HCT116 (cell line): ENCODE measurements at regions of chr2 and their contacts with region 1.

Region 1: GRCh38 chr2:120680136-120680761 is 55.4 kb upstream of the GLI2 start:
- DNase-seq: peak; percentile 80
- ATAC-seq: peak; percentile 82
- H3K4me3 ChIP-seq: no peak overlapping the region
- H3K27ac ChIP-seq: no peak overlapping the region
- H3K4me1 ChIP-seq: peaks cover 0 to 10% of the 10 kb centered on the region in 2 experiments; a peak in 2 of 4 replicates
- H3K27me3 ChIP-seq: no peaks in the 10 kb centered on the region
- CTCF ChIP-seq: peak; percentile 65 to 83 (median 65)
- POLR2A ChIP-seq: no peak
- RAD21 ChIP-seq: peak; percentile 92

Region 2: DNA sequence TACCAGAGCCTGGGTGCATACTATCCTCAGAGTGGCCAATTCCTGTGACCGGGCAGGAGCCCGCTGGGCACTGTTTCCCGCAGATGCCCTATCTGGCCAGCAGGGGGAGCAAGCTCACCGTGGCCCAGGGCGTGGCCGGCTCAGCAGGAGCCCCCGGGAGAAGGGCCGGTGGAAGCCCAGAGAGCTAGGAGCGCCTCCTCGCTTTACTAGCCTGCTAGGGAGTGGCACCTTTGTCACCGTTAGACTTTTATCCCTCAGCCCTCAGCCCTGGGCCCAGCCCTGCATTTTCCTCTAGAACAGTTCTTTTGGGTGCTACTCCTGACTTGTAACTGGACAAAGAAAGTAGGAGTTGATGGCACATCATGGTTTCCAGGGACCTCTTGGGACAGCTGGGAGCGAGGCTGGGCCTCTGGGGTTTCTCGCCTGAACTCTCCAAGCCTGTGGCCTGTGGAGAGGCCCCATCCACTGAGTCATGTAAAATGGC is 977.3 kb before region 1 on chr2:
- CTCF ChIA-PET with region 1: no interaction called
- POLR2A ChIA-PET with region 1: no interaction called
- RAD21 ChIA-PET with region 1: no interaction called
- intact Hi-C with region 1: loop called (anchors 5 kb)
- DNase-seq: peak; percentile 58
- ATAC-seq: peak; percentile 99
- H3K4me3 ChIP-seq: no peak overlapping the region
- H3K27ac ChIP-seq: no peak overlapping the region
- H3K4me1 ChIP-seq: peaks cover 0 to 5% of the 10 kb centered on the region in 2 experiments; a peak in 1 of 4 replicates
- H3K27me3 ChIP-seq: no peaks in the 10 kb centered on the region
- CTCF ChIP-seq: peak; percentile 93 to 98 (median 97)
- POLR2A ChIP-seq: no peak
- RAD21 ChIP-seq: peak; percentile 92

Region 3: GRCh38 chr2:120228531-120228930 is 451.7 kb before region 1 on chr2:
- CTCF ChIA-PET with region 1: no interaction called
- POLR2A ChIA-PET with region 1: no interaction called
- RAD21 ChIA-PET with region 1: no interaction called
- intact Hi-C with region 1: loop called (anchors 5 kb)
- DNase-seq: no peak
- ATAC-seq: no peak
- H3K4me3 ChIP-seq: no peak overlapping the region
- H3K27ac ChIP-seq: no peak overlapping the region
- H3K4me1 ChIP-seq: peaks cover 6 to 21% of the 10 kb centered on the region in 2 experiments; a peak in 3 of 4 replicates
- H3K27me3 ChIP-seq: no peaks in the 10 kb centered on the region
- CTCF ChIP-seq: peak in 2 of 3 experiments; percentile 12 to 78; a peak in 1 of 6 replicates
- POLR2A ChIP-seq: no peak
- RAD21 ChIP-seq: peak; percentile 82

Region 4: GRCh38 chr2:120253022-120253882 is 427.0 kb before region 1 on chr2:
- CTCF ChIA-PET with region 1: no interaction called
- POLR2A ChIA-PET with region 1: no interaction called
- RAD21 ChIA-PET with region 1: no interaction called
- intact Hi-C with region 1: no loop called
- DNase-seq: no peak
- ATAC-seq: peak; percentile 74
- H3K4me3 ChIP-seq: peak overlapping the region; percentile 78 to 83
- H3K27ac ChIP-seq: peak overlapping the region; percentile 62
- H3K4me1 ChIP-seq: peaks cover 7 to 18% of the 10 kb centered on the region in 2 experiments; a peak in 3 of 4 replicates
- H3K27me3 ChIP-seq: no peaks in the 10 kb centered on the region
- CTCF ChIP-seq: no peak; a peak in 1 of 6 replicates
- POLR2A ChIP-seq: no peak
- RAD21 ChIP-seq: 0 out of 2 replicates have a peak, but pooled peaks have one; percentile 17

Region 5: GRCh38 chr2:120343433-120344105 is 336.7 kb before region 1 on chr2:
- CTCF ChIA-PET with region 1: interaction called, 32 read pairs
- POLR2A ChIA-PET with region 1: no interaction called
- RAD21 ChIA-PET with region 1: interaction called, 4 to 6 read pairs
- intact Hi-C with region 1: loop called (anchors 1 kb)
- DNase-seq: peak; percentile 59
- ATAC-seq: peak; percentile 88
- H3K4me3 ChIP-seq: 0 out of 4 replicates have a peak overlapping the region, but pooled peaks of 1 of the 2 experiments have one; percentile 23
- H3K27ac ChIP-seq: no peak overlapping the region
- H3K4me1 ChIP-seq: peaks cover 0 to 23% of the 10 kb centered on the region in 2 experiments; a peak in 2 of 4 replicates
- H3K27me3 ChIP-seq: no peaks in the 10 kb centered on the region
- CTCF ChIP-seq: peak; percentile 77 to 95 (median 81)
- POLR2A ChIP-seq: no peak
- RAD21 ChIP-seq: peak; percentile 98

Region 6: DNA sequence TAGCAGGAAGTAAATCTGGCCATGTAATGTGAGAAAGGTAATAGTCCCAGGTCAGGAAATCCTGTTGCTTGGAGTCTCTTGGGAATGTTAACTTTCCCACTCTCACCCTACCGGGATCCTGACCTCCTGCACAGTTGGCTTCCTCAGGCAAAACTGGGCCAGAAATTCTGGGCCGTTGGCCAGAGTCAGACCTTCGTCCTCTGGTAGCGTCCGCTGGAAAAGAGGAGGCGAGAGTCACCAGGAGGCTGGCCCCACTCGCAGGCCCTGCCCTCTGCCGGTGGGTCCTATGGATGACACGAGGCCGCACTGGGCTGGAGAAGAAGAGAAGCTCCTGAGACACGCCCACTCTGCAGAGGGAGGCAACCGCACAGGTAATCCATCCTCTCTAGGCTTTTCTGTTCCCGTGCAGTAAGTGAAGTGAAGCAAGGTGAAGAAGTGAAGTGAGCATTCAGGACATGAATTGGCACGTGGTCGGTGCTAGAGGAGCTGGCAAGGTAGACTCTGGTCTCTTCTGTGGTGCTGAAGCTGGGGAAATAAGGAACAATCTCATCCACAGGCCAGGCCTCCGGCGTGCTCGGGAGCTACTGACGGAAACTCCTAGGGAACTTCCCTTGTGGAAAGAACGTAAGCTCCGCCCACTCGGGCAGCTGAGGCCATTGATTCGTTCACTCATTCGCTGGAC is 127.3 kb before region 1 on chr2:
- CTCF ChIA-PET with region 1: interaction called, 5 read pairs
- POLR2A ChIA-PET with region 1: interaction called, 3 read pairs
- RAD21 ChIA-PET with region 1: interaction called in 1 of 2 experiments, 3 read pairs
- intact Hi-C with region 1: loop called (anchors 2 kb)
- DNase-seq: peak; percentile 84
- ATAC-seq: peak; percentile 100
- H3K4me3 ChIP-seq: peak overlapping the region; percentile 37 to 48
- H3K27ac ChIP-seq: no peak overlapping the region
- H3K4me1 ChIP-seq: peaks cover 4 to 16% of the 10 kb centered on the region in 2 experiments; a peak in 3 of 4 replicates
- H3K27me3 ChIP-seq: no peaks in the 10 kb centered on the region
- CTCF ChIP-seq: peak; percentile 66 to 85 (median 72); a peak in 5 of 6 replicates
- POLR2A ChIP-seq: no peak
- RAD21 ChIP-seq: peak; percentile 68

Region 7: DNA sequence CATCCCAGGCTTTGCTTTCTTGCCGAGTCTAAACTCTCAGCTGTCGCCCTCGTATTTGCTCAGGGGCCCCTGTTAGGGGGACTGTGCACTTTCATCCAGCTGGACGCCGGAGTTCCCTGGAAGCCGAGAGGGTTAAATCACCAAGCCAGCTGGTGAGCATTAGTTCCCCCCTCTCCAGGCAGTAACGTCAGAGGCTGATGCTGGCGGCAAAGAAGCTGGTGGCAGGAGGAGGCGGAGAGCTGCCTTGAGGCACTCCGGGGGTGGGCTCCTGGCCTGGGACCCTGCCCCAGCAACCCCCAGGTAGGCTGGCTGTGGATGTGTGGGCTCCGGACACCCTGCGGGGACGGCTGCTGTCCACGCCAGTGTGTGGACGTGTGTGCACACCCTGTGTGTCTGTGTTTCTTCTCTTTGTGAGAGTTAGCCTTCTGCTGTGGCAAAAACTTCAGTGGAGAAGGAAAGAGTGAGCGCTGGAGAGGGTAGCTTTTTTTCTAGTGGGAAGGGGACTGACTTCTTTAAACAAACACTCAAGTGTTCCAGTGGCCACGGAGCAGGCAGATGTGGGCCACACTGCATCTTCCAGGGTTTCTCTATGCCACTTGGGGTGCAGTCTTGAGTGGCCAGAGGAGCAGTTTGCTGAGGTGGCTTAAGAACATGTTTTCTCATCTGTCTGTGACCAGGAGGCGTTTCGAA is 140.2 kb after region 1 on chr2:
- CTCF ChIA-PET with region 1: no interaction called
- POLR2A ChIA-PET with region 1: no interaction called
- RAD21 ChIA-PET with region 1: no interaction called
- intact Hi-C with region 1: no loop called
- DNase-seq: no peak
- ATAC-seq: no peak
- H3K4me3 ChIP-seq: no peak overlapping the region
- H3K27ac ChIP-seq: no peak overlapping the region
- H3K4me1 ChIP-seq: peaks cover 6 to 7% of the 10 kb centered on the region in 2 experiments; a peak in 2 of 4 replicates
- H3K27me3 ChIP-seq: no peaks in the 10 kb centered on the region
- CTCF ChIP-seq: no peak
- POLR2A ChIP-seq: no peak
- RAD21 ChIP-seq: no peak